T-cell (primary cell): ENCODE measurements at regions of chr19 and their contacts with region 1.

Region 1: DNA sequence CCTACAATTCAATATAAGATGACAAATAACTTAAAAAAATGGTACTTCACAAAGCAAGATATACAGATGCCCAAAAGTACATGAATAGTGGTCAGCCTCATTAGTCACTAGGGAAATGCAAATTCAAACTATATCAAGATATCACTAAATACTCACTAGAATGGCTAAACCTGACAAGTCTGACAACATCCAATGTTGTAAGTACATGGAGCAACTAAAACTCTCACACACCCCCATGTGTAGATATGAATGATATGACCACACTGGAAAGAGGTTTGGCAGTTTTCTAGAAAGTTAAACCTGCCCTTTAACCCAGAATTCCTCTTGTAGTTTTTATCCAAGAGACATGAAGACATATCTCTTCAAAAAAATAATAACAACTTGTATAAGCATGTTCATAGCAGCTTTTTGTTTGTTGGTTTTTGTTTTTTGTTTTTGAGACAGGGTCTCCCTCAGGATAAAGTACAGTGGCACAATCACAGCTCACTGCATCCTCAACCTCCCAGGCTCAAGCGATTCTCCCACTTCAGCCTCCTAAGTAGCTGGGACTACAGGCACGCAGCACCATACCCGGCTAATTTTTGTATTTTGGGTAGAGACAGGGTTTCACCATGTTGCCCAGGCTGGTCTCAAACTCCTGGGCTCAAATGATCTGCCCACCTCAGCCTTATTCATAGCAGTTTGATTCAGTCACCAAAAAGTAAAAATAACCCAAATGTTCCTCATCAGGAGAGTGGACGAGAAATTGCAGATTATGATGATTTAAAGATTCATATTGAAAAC is 55.1 kb downstream of the RFX2 start:
- DNase-seq: no peak
- ATAC-seq: no peak
- H3K4me3 ChIP-seq: no peak overlapping the region
- H3K4me3 Mint-ChIP-seq: no peak overlapping the region
- H3K27ac ChIP-seq: no peak overlapping the region
- H3K27ac Mint-ChIP-seq: no peak overlapping the region
- H3K4me1 ChIP-seq: peaks cover 0 to 8% of the 10 kb centered on the region in 2 experiments
- H3K4me1 Mint-ChIP-seq: peaks cover 6 to 23% (median 18%) of the 10 kb centered on the region in 3 donors
- H3K27me3 ChIP-seq: no peaks in the 10 kb centered on the region
- H3K27me3 Mint-ChIP-seq: no peaks in the 10 kb centered on the region

Region 2: DNA sequence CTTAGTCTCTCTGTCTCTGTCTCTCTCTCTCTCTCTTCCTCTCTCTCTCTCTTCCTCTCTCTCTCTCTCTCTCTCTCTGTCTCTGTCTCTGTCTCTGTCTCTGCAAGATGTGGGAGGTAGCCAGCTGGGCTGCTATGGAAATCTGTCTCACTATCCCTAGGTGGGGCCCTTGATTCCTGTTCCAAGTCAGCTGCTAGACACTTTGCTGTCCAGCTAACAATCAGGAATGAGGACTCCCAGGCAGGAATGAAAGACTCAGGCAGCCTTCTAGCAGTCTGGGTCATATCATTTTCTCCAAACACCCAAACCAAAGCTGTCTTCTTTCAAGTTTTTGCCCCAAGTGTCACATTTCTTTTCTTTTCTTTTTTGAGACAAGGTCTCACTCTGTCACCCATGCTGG is 311.6 kb before region 1 on chr19:
- CTCF ChIA-PET with region 1: interaction called in 1 of 2 experiments, 10 read pairs
- POLR2A ChIA-PET with region 1: no interaction called
- DNase-seq: no peak
- ATAC-seq: no peak
- H3K4me3 ChIP-seq: no peak overlapping the region
- H3K4me3 Mint-ChIP-seq: no peak overlapping the region
- H3K27ac ChIP-seq: no peak overlapping the region
- H3K27ac Mint-ChIP-seq: no peak overlapping the region
- H3K4me1 ChIP-seq: no peaks in the 10 kb centered on the region
- H3K4me1 Mint-ChIP-seq: no peaks in the 10 kb centered on the region
- H3K27me3 ChIP-seq: peaks cover 0 to 16% of the 10 kb centered on the region in 2 experiments
- H3K27me3 Mint-ChIP-seq: peaks cover 3 to 6% of the 10 kb centered on the region in 2 donors

Region 3: GRCh38 chr19:6021878-6022569 is 33.2 kb before region 1 on chr19:
- CTCF ChIA-PET with region 1: no interaction called
- POLR2A ChIA-PET with region 1: no interaction called
- DNase-seq: peak; percentile 55 to 88 (median 74)
- ATAC-seq: peak; percentile 88 to 96 (median 93)
- H3K4me3 ChIP-seq: no peak overlapping the region
- H3K4me3 Mint-ChIP-seq: no peak overlapping the region
- H3K27ac ChIP-seq: no peak overlapping the region
- H3K27ac Mint-ChIP-seq: no peak overlapping the region
- H3K4me1 ChIP-seq: peaks cover 7 to 8% of the 10 kb centered on the region in 2 experiments
- H3K4me1 Mint-ChIP-seq: peaks cover 4 to 18% (median 4%) of the 10 kb centered on the region in 3 donors
- H3K27me3 ChIP-seq: peaks cover 0 to 26% of the 10 kb centered on the region in 2 experiments
- H3K27me3 Mint-ChIP-seq: peaks cover 0 to 8% of the 10 kb centered on the region in 2 donors

Region 4: GRCh38 chr19:6038634-6039405 is 16.4 kb before region 1 on chr19:
- CTCF ChIA-PET with region 1: no interaction called
- POLR2A ChIA-PET with region 1: no interaction called
- DNase-seq: no peak
- ATAC-seq: no peak
- H3K4me3 ChIP-seq: no peak overlapping the region
- H3K4me3 Mint-ChIP-seq: no peak overlapping the region
- H3K27ac ChIP-seq: no peak overlapping the region
- H3K27ac Mint-ChIP-seq: no peak overlapping the region
- H3K4me1 ChIP-seq: no peaks in the 10 kb centered on the region
- H3K4me1 Mint-ChIP-seq: no peaks in the 10 kb centered on the region
- H3K27me3 ChIP-seq: no peaks in the 10 kb centered on the region
- H3K27me3 Mint-ChIP-seq: no peaks in the 10 kb centered on the region

Region 5: GRCh38 chr19:6098574-6098973 is 43.4 kb after region 1 on chr19:
- CTCF ChIA-PET with region 1: no interaction called
- POLR2A ChIA-PET with region 1: no interaction called
- DNase-seq: no peak
- ATAC-seq: no peak
- H3K4me3 ChIP-seq: no peak overlapping the region
- H3K4me3 Mint-ChIP-seq: no peak overlapping the region
- H3K27ac ChIP-seq: no peak overlapping the region
- H3K27ac Mint-ChIP-seq: no peak overlapping the region
- H3K4me1 ChIP-seq: peaks cover 4 to 6% of the 10 kb centered on the region in 2 experiments
- H3K4me1 Mint-ChIP-seq: peaks cover 14 to 22% (median 16%) of the 10 kb centered on the region in 3 donors
- H3K27me3 ChIP-seq: no peaks in the 10 kb centered on the region
- H3K27me3 Mint-ChIP-seq: no peaks in the 10 kb centered on the region